MCF 10A (cell line): ENCODE measurements at regions of chr10 and their contacts with region 1.

Region 1: DNA sequence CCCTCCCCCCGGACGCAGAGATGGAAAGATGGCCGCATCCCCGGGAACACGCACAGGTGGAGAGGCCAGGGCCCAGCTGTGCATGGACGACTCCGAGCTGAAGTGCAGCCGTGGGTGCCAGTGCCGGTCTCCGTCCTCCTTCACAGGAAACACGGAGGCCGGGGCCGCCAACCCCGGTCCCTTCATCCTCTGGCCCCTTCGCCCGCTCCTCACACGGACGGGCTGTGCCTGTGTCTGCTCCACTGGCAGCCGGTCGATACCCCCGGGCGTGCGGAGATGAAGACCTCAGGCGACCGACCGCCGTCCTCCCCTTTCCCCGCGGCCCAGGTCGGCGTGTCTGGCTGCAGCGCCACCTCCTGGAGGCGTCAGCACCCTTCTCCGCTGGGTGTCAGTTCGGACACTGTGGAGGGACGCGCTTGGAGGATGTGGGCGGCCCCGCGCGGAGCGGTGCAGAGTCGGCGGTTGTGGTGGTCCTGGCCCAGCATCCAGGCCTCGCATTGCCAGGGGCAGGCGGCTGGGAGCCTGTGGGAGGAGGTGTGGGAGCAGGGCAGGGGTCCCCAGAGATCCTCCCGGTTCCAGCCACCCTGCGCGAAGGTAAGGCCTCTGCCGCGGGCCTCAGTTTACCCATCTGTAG is 9.9 kb downstream of the ZNF511 start:
- DNase-seq: peak; percentile 66
- H3K4me3 Mint-ChIP-seq: peak overlapping the region; percentile 37
- H3K27ac Mint-ChIP-seq: no peak overlapping the region
- H3K4me1 Mint-ChIP-seq: peaks cover 12% of the 10 kb centered on the region
- H3K27me3 Mint-ChIP-seq: peaks cover 13% of the 10 kb centered on the region
- CTCF ChIP-seq: peak; percentile 75

Region 2: GRCh38 chr10:133298431-133298830 is 20.2 kb before region 1 on chr10:
- CTCF ChIA-PET with region 1: interaction called, 10 read pairs
- POLR2A ChIA-PET with region 1: no interaction called
- intact Hi-C with region 1: no loop called
- DNase-seq: no peak
- H3K4me3 Mint-ChIP-seq: no peak overlapping the region
- H3K27ac Mint-ChIP-seq: no peak overlapping the region
- H3K4me1 Mint-ChIP-seq: peaks cover 4% of the 10 kb centered on the region
- H3K27me3 Mint-ChIP-seq: no peaks in the 10 kb centered on the region
- CTCF ChIP-seq: no peak